Prostate gland (tissue), 2 donors: ENCODE measurements at regions of chr1 and their contacts with region 1.

Region 1: DNA sequence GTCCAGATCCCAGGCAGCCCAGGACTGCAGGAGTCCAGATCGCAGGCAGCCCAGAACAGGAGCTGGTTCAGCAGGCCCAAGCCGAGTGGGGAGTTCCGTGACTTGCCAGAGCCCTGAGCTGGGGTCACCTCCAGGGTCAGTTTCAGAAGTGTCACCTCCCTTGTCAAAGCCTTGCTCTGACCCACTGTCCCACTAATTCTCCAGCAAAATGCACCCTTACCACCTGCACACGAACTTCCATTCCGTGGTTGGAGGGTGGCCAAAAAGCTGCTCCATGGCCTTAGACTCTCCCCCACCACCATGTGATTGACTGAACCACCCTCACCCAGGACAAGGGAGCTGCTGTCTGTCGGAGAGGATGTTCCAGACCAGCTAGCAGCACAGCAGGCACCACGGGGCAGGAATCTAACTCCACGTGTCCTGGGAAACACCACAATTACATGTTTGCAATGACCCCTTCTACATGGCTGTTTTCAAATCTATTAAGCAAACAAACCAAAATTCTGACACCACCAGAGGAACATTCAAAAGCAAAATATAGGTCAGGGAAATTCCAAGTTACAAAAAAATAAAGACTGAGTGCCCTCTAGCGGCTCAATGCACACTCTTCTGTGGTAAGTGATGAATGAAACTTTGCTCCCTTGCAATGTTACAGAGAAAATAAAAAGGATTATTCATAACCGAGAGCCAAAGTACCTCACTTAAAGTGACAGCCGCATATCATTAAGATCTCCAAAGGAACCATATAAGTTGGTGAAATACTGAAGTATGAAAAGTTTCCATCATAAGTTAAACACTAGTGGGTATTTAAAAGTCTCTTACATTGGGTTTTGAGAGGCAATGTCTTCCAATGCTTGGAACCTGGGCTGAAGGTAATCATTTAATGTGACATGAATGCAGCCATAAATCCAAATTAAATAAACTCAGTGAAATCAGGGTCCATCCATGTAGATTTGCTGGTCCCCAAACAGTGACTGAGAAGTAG is 76.3 kb downstream of the NPHP4 start:
- DNase-seq: no peak
- H3K4me3 ChIP-seq: no peak overlapping the region
- H3K27ac ChIP-seq: no peak overlapping the region
- H3K4me1 ChIP-seq: no peaks in the 10 kb centered on the region
- H3K27me3 ChIP-seq: no peaks in the 10 kb centered on the region
- CTCF ChIP-seq: peak; percentile 16 to 66 (median 40)
- POLR2A ChIP-seq: no peak

Region 2: DNA sequence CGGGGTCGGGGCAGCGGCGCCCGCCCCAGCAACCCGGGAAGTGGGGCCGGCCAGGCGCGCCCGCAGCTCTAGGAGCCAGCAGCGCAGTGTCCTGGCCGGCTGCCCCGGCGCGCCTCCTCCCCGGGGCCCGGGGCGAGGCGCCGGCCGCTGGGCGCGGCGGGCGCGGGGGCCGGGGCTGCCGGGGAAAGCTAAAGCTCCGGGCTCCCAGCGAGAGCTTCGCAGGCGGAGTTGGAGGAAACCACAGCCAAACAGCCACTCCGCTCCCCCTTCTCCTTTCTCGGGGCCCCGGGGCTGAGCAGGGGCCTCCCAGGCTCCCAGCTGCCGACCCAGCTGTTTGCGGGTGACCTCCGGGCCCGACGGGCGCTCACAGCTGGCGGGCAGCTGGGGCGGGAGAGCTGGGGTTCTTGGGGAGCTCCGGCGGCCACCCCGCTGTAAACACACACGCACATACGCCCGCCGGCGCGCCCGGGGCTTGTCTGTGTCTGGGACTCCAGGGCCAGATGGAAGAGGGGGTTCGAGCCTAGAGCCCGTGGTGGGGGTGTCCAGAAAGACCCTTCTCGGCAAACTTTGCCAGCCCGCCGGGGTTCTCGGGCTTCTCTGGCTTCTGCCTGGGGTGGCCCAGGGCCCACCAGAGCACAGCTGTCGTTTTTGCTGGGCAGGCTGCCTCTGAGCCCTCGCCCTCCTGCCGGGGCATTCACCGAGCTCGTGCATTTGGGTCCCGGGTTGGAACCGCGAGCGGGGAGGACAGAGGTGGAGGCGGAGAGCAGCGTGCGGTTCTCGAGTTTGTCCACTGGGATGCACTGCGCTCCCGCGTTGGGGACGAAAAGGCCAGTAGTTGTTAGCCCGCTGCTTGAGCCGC is 1260.0 kb before region 1 on chr1:
- intact Hi-C with region 1: loop called (anchors 5 kb)
- DNase-seq: peak; percentile 28
- H3K4me3 ChIP-seq: peak overlapping the region; percentile 21 to 23
- H3K27ac ChIP-seq: peak overlapping the region in 1 of 2 donors; percentile 47
- H3K4me1 ChIP-seq: no peaks in the 10 kb centered on the region
- H3K27me3 ChIP-seq: peaks cover 34% of the 10 kb centered on the region
- CTCF ChIP-seq: peak in 3 of 4 experiments; percentile 54 to 73 (median 61)
- POLR2A ChIP-seq: no peak